Endothelial cell of umbilical vein (primary cell): ENCODE measurements at regions of chr2 and their contacts with region 1.

Region 1: GRCh38 chr2:25376750-25377621 is 35.3 kb upstream of the DNMT3A start:
- DNase-seq: peak; percentile 82
- H3K4me3 ChIP-seq: peak overlapping the region in 1 of 3 experiments; percentile 13
- H3K27ac ChIP-seq: no peak overlapping the region
- H3K4me1 ChIP-seq: peaks cover 11% of the 10 kb centered on the region
- H3K27me3 ChIP-seq: no peaks in the 10 kb centered on the region
- CTCF ChIP-seq: peak; percentile 86 to 99
- POLR2A ChIP-seq: no peak

Region 2: DNA sequence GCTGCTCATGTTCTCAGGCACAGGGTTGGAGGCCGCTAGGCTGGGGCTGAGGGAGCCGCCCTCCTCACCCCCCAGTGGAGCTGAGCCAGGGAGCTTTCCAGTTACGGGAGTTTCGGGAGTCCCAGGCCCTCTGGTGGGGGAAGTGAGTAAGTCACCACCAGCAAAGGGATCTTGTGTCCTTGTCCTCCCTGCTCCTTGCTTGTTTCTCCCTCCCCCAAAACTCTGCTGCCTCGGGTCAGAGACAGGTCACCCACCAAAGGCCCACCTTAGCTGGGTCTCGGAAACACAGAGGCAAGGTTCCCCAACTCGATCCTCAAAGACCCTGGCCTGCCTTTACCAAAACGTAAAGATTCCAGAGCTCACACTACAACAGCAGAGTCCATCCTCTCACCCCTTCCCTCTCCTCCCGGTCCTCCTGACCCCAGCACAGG is 148.1 kb before region 1 on chr2:
- CTCF ChIA-PET with region 1: interaction called, 5 read pairs
- POLR2A ChIA-PET with region 1: no interaction called
- dilution Hi-C with region 1: no loop called
- intact Hi-C with region 1: loop called (anchors 1 kb)
- DNase-seq: peak; percentile 72
- H3K4me3 ChIP-seq: no peak overlapping the region
- H3K27ac ChIP-seq: no peak overlapping the region
- H3K4me1 ChIP-seq: no peaks in the 10 kb centered on the region
- H3K27me3 ChIP-seq: no peaks in the 10 kb centered on the region
- CTCF ChIP-seq: peak; percentile 68 to 85
- POLR2A ChIP-seq: no peak

Region 3: GRCh38 chr2:25309402-25309801 is 67.6 kb before region 1 on chr2:
- CTCF ChIA-PET with region 1: interaction called, 10 read pairs
- POLR2A ChIA-PET with region 1: no interaction called
- dilution Hi-C with region 1: no loop called
- intact Hi-C with region 1: loop called (anchors 1 kb)
- DNase-seq: peak; percentile 57
- H3K4me3 ChIP-seq: no peak overlapping the region
- H3K27ac ChIP-seq: no peak overlapping the region
- H3K4me1 ChIP-seq: no peaks in the 10 kb centered on the region
- H3K27me3 ChIP-seq: no peaks in the 10 kb centered on the region
- CTCF ChIP-seq: peak; percentile 53 to 64
- POLR2A ChIP-seq: no peak

Region 4: DNA sequence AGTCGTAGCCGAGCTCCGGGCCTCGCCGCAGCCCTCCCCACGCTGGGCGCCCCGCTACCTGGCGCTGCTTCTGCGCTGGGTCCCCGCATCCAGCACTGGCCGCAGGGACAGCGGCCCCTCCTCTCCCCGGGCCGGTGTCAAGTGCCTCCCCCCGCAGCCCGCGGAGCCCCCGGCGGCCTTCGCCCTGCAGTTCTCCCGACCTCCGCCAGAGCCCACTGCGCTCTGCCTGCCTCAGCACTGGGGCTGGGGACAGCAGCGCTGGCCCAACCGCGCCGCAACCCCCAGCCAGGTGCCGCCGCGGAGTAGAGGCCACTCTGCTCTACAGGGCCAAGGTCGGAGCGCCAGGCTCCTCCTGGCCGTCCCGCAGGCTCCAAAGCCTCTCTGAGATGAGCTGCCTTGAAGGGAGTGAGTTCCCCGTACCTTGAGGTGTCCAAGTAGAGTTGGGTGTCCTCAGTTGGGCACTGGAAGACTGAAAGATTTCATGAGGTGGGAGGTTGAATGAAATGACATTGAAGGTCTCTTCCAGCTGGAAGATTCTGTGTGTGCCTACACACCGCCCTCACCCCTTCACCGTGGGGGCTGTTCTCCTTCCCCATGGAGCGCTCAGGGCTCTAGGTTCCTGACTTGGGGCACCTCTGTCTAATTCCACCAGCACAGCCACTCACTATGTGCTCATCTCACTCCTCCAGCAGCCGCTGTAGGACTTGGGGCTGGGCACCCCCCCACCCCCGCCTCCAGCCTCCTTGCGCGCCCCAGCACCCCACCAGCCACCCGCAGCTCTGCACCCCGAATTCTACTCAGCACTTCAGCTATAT is 34.4 kb before region 1 on chr2:
- CTCF ChIA-PET with region 1: interaction called, 5 read pairs
- POLR2A ChIA-PET with region 1: no interaction called
- dilution Hi-C with region 1: no loop called
- intact Hi-C with region 1: loop called (anchors 1 kb)
- DNase-seq: peak; percentile 88
- H3K4me3 ChIP-seq: peak overlapping the region in 2 of 3 experiments; percentile 29 to 58
- H3K27ac ChIP-seq: no peak overlapping the region
- H3K4me1 ChIP-seq: no peaks in the 10 kb centered on the region
- H3K27me3 ChIP-seq: peaks cover 0 to 5% of the 10 kb centered on the region in 2 experiments
- CTCF ChIP-seq: peak; percentile 93 to 95
- POLR2A ChIP-seq: no peak

Region 5: DNA sequence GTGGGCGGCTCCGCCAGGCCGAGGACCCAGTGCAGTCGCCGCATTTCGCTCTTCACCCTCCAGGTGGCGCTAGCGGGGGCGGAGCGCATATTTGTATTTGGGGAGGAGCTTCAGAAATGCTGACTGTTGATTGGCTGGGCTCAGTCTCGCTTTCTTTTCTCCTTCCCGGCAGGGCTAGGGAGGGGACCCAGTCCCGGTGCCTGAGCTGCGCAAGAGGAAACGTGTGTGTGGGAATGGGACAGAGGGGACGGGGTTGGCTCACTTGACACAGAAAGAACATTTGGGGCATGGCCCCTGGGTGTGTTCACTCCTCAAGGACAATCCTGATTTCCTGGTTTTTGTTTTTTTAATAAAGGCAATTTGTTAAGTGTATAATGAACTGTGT is 14.9 kb before region 1 on chr2:
- CTCF ChIA-PET with region 1: interaction called, 55 read pairs
- POLR2A ChIA-PET with region 1: no interaction called
- dilution Hi-C with region 1: no loop called
- intact Hi-C with region 1: loop called (anchors 1 kb)
- DNase-seq: peak; percentile 93
- H3K4me3 ChIP-seq: peak overlapping the region in 1 of 3 experiments; percentile 34
- H3K27ac ChIP-seq: no peak overlapping the region
- H3K4me1 ChIP-seq: peaks cover 4% of the 10 kb centered on the region
- H3K27me3 ChIP-seq: no peaks in the 10 kb centered on the region
- CTCF ChIP-seq: peak; percentile 96 to 97
- POLR2A ChIP-seq: peak; percentile 68

Region 6: GRCh38 chr2:25386971-25387875 is 10.2 kb after region 1 on chr2:
- CTCF ChIA-PET with region 1: interaction called, 15 read pairs
- POLR2A ChIA-PET with region 1: no interaction called
- dilution Hi-C with region 1: no loop called
- intact Hi-C with region 1: no loop called
- DNase-seq: no peak
- H3K4me3 ChIP-seq: no peak overlapping the region
- H3K27ac ChIP-seq: no peak overlapping the region
- H3K4me1 ChIP-seq: no peaks in the 10 kb centered on the region
- H3K27me3 ChIP-seq: no peaks in the 10 kb centered on the region
- CTCF ChIP-seq: no peak
- POLR2A ChIP-seq: no peak

Region 7: GRCh38 chr2:25411281-25411680 is 34.3 kb after region 1 on chr2:
- CTCF ChIA-PET with region 1: no interaction called
- POLR2A ChIA-PET with region 1: no interaction called
- dilution Hi-C with region 1: no loop called
- intact Hi-C with region 1: no loop called
- DNase-seq: no peak
- H3K4me3 ChIP-seq: no peak overlapping the region
- H3K27ac ChIP-seq: no peak overlapping the region
- H3K4me1 ChIP-seq: no peaks in the 10 kb centered on the region
- H3K27me3 ChIP-seq: no peaks in the 10 kb centered on the region
- CTCF ChIP-seq: no peak
- POLR2A ChIP-seq: no peak

Region 8: DNA sequence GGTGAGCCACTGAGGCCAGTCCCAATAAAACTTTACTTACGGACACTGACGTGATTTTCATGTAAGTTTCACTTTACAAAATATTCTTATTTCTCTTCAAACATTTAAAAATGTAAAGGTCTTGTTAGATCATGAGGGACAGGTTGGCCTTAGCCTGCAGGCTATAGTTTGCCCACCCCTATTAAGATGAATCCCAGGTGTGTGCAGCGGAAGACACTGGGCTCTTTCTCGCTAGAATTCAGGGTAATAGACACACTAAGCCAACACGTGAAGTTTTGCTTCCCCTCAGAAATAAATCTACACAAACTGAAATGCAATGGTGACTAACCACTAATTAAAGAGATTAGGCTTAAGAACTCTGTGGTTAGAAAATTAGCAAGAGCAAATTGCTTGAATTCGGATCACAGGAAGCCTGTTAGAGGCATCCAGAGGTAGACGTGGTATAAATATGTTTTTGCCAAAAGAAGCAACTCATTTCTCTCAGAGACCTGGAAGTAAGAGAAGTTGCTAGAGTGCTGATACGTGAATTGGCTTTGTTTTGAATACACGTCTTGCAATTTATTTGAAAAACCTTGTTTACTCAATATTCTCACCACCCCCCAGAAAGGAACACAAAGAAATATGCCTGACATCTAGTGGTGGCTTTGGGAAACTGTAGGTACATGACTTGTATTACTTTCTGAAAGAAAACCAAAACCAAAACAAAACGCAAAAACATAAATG is 144.8 kb after region 1 on chr2:
- CTCF ChIA-PET with region 1: interaction called, 4 read pairs
- POLR2A ChIA-PET with region 1: no interaction called
- dilution Hi-C with region 1: no loop called
- intact Hi-C with region 1: loop called (anchors 1 kb)
- DNase-seq: peak; percentile 86
- H3K4me3 ChIP-seq: no peak overlapping the region
- H3K27ac ChIP-seq: no peak overlapping the region
- H3K4me1 ChIP-seq: peaks cover 7% of the 10 kb centered on the region
- H3K27me3 ChIP-seq: no peaks in the 10 kb centered on the region
- CTCF ChIP-seq: peak; percentile 55 to 61
- POLR2A ChIP-seq: no peak